ENCODE measurements at regions of chr2 and their contacts with region 1.

Region 1: DNA sequence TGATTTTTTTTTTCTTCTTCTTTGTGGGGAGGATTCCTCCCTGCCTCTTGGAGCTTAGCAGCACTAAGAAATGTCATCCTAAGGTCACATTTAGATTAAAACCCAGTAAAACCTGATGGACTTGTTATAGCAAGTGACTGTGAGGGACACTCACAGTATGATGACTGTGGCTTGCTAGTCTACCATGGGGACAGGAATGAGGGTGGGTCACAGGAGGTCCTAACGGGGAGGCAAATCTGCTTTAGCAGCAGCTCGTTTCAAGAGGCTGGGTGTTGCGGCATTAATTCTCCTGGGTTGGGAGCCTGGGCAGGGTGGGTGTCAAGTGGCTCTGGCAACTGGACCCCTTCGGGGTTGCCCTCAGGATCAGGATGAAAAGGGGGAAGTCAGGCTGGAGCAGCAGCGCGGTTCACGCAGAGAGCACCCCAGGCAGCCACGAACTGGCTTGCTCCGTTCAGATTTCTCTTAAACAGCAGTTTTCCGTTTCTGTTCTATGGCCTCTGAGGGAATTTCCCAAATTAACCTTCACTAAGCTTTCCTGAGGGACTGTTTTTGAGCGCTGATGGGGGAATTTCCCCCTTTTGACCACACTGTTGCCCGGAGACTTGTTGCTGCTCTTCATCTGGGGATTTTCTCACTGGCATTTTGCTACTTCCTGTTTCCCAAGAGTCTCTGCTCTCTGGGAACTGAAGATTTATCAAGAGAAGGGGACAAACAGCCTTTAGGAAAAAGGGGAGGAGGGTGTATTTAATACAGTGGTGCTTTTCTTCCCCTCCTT is 59.8 kb upstream of the PELI1 start:
- DNase-seq: peak; percentile 20
- H3K4me3 Mint-ChIP-seq: peak overlapping the region; percentile 53
- H3K27ac Mint-ChIP-seq: peak overlapping the region; percentile 86
- H3K4me1 Mint-ChIP-seq: peaks cover 64% of the 10 kb centered on the region
- H3K27me3 Mint-ChIP-seq: no peaks in the 10 kb centered on the region

Region 2: GRCh38 chr2:64144057-64145013 is 59.7 kb before region 1 on chr2 and contains the start of gene PELI1:
- CTCF ChIA-PET with region 1: no interaction called
- POLR2A ChIA-PET with region 1: no interaction called
- DNase-seq: peak; percentile 92
- H3K4me3 Mint-ChIP-seq: peak within 1 kb of the TSS; percentile 84
- H3K27ac Mint-ChIP-seq: peak within 1 kb of the TSS; percentile 96
- H3K4me1 Mint-ChIP-seq: peaks cover 25% of the 10 kb centered on the region
- H3K27me3 Mint-ChIP-seq: no peaks in the 10 kb centered on the region
- total RNA-seq, gene PELI1: 25.6 to 29.8 TPM

Region 3: DNA sequence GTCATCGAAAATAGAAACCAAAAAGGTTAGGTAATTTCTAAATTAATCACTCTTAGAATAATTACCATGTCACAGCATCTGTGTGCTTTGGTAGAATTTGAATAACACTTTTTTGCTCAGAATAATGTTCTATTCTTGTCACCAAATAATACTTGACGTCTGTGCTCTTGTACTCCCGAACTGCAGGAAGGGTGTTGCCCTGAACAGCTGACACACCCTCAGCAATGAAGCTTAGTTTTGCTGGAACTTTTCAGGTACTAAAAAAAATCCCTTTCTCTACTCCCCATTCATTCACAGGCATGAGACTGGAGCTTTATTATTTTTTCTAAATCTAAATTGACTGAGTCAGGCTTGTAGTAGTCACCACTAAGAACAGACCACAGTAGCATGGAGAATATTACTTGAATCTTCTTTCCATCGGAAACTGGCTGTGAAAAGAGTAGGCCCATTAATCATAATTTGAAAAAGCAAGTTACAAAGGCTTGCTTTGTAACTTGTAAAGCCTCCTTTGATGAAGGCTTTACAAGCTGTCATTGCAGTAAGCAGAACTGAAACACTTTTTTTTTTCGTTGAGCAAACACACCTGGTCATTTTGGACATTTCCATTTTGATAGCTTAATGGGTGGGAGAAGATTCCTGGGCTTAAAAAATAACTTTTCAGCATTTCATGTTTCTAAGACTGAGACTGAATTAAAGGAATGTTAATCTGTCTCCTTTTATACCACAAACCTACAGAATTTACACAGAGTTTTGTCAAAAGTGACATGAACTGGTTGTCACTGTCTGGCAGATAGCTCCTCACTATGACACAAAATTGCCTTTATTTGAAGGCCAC is 10.5 kb after region 1 on chr2:
- CTCF ChIA-PET with region 1: interaction called, 11 read pairs
- POLR2A ChIA-PET with region 1: no interaction called
- DNase-seq: peak; percentile 45
- H3K4me3 Mint-ChIP-seq: peak overlapping the region; percentile 52
- H3K27ac Mint-ChIP-seq: peak overlapping the region; percentile 93
- H3K4me1 Mint-ChIP-seq: peaks cover 52% of the 10 kb centered on the region
- H3K27me3 Mint-ChIP-seq: no peaks in the 10 kb centered on the region

Region 4: DNA sequence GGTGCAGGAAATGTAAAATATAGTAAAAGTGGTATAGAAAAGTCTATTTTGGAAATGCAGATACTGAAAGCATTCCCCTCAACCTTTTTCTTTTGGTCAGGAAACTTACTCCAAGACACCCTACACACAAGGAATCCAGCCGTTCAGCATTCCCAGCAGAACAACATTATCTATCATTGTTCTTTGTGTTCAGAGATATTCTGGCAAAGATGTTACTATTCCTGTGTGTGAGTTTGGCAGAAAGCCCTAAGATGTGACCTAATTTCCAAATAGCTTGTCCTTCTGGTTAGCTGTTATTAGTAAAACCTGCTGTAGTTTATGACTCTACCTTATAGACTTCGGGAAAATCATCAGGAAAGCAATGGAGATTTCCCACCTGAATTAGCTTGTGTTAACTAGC is 18.3 kb after region 1 on chr2:
- CTCF ChIA-PET with region 1: interaction called, 10 read pairs
- POLR2A ChIA-PET with region 1: no interaction called
- DNase-seq: no peak
- H3K4me3 Mint-ChIP-seq: no peak overlapping the region
- H3K27ac Mint-ChIP-seq: peak overlapping the region; percentile 85
- H3K4me1 Mint-ChIP-seq: peaks cover 37% of the 10 kb centered on the region
- H3K27me3 Mint-ChIP-seq: peaks cover 4% of the 10 kb centered on the region